B cell (primary cell): ENCODE measurements at regions of chr1 and their contacts with region 1.

Region 1: DNA sequence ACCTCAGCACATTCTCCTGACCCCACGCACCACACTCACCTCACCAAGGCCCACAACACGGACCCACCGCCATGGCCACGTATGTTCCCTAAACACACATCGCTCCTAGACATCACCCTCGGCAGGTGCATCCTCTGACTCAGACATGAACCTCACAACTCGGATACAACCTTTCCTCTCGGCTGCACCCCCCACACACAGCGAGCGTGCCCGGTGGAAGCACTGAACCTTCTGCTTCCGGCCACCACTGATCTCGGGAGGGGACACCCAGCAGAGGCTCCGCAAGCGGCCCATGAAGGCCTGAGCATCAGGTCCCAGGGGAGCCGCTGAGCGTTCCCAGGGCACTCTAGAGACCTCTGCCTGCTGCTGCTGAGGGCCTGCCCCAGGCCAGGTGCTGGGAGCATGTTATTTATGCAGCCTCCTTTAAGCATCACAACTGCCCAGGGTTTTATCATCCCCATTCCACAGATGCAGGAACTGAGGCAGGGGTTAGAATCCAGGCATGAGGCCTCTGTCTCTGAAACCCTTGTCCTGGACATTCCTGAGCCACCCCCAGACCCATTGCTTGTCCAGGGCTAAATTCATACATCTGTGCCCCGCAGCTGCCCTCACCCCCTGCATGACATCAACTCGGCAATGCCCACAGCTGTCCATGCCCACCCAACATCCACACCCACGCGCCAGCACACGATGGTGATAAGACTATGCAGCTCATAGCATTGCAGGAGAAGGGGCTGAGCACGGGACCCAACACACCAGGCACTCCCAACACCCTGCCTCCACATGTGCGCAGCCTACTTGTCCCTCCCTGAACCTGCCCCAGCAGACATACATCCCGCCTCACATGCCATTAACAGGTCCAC is 27.0 kb downstream of the SDC3 start:
- DNase-seq: peak; percentile 78
- ATAC-seq: peak; percentile 90
- H3K4me3 ChIP-seq: no peak overlapping the region
- H3K4me3 Mint-ChIP-seq: peak overlapping the region; percentile 64
- H3K27ac ChIP-seq: peak overlapping the region in 1 of 2 donors; percentile 16
- H3K27ac Mint-ChIP-seq: peak overlapping the region; percentile 88
- H3K4me1 ChIP-seq: peaks cover 14 to 20% of the 10 kb centered on the region in 2 donors
- H3K4me1 Mint-ChIP-seq: peaks cover 27% of the 10 kb centered on the region
- H3K27me3 ChIP-seq: peaks cover 0 to 17% (median 1%) of the 10 kb centered on the region in 4 experiments
- H3K27me3 Mint-ChIP-seq: peaks cover 45% of the 10 kb centered on the region
- CTCF ChIP-seq: no peak

Region 2: DNA sequence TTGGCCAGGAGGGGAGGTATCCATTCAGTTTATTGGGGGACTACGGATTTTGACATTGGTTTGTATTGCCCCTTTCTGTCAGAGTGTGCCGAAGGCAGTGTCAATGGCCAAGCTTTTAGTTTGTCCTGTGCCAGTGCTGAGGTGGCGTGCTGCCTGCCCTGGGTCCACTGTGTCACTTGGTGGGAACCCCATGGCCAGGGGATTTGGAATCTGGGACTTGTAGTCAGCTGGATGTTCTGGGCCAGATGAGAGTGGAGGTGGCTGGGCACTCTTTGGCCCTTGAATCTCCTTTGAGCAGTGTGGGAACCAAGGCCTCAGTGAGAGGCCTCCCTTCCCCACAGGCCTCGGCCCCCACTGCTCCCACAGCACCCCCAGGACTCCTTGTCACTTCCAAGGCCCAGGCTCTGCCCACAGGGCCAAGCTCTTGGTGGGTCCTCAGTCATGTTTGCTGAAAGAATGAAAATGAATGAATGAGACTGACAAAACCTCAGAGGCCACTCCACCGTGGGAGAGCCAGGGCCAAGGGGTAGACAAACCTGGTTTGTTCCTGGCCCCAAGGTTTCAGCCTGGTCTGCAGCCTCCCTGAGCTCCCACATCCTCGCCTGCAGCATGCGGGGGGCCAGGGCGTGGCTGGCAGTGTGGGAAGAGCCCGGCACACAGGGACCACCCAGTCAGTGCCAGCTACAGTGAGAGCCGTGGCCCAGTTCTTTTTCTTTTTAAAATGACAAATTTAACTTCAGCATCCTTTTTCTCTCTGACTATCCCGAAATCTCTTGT is 570.4 kb before region 1 on chr1:
- CTCF ChIA-PET with region 1: no interaction called
- POLR2A ChIA-PET with region 1: no interaction called
- intact Hi-C with region 1: no loop called
- DNase-seq: no peak
- ATAC-seq: no peak
- H3K4me3 ChIP-seq: no peak overlapping the region
- H3K4me3 Mint-ChIP-seq: no peak overlapping the region
- H3K27ac ChIP-seq: no peak overlapping the region
- H3K27ac Mint-ChIP-seq: no peak overlapping the region
- H3K4me1 ChIP-seq: no peaks in the 10 kb centered on the region
- H3K4me1 Mint-ChIP-seq: no peaks in the 10 kb centered on the region
- H3K27me3 ChIP-seq: peaks cover 0 to 6% (median 1%) of the 10 kb centered on the region in 4 experiments
- H3K27me3 Mint-ChIP-seq: peaks cover 27% of the 10 kb centered on the region
- CTCF ChIP-seq: no peak

Region 3: DNA sequence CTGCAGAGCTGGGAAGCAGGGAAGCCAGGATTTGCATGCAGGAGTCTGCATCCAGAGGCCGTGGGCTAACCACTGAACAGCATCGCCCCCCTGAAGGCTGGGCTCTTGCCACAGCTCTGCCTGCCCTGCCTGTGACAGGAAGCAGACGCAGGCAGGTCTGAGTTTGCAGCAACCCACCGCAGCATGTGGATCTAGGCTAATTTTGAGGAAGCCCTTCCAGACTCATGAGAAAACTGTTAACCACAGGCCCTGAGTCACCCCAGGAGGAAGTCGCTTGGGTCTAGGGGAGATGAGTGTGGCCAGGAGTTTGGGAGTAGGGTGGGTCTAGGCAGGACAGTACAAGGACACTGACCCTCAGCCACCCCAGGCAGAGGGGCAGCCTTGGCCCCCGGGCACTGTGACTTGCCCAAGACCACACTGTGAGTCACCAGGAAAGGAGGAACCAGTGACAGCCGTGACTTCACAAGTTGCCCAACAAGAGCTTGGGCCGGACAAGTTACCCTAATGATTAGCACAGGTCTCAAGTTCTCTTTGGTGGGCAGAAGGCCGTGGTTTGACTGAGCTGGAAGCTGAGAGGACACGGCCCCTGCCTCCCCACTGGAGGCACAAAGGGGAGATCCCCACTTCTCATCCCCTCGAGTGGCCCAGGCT is 124.9 kb before region 1 on chr1:
- CTCF ChIA-PET with region 1: no interaction called
- POLR2A ChIA-PET with region 1: no interaction called
- intact Hi-C with region 1: loop called (anchors 1 kb)
- DNase-seq: peak; percentile 87
- ATAC-seq: peak; percentile 19
- H3K4me3 ChIP-seq: peak overlapping the region; percentile 80 to 97 (median 95)
- H3K4me3 Mint-ChIP-seq: peak overlapping the region; percentile 92
- H3K27ac ChIP-seq: peak overlapping the region; percentile 98 to 100
- H3K27ac Mint-ChIP-seq: peak overlapping the region; percentile 92
- H3K4me1 ChIP-seq: peaks cover 62 to 87% of the 10 kb centered on the region in 2 donors
- H3K4me1 Mint-ChIP-seq: peaks cover 78% of the 10 kb centered on the region
- H3K27me3 ChIP-seq: no peaks in the 10 kb centered on the region
- H3K27me3 Mint-ChIP-seq: no peaks in the 10 kb centered on the region
- CTCF ChIP-seq: no peak

Region 4: GRCh38 chr1:30790850-30791778 is 90.4 kb before region 1 on chr1:
- CTCF ChIA-PET with region 1: interaction called, 3 read pairs
- POLR2A ChIA-PET with region 1: interaction called, 15 read pairs
- intact Hi-C with region 1: no loop called
- DNase-seq: peak; percentile 82
- ATAC-seq: peak; percentile 80
- H3K4me3 ChIP-seq: no peak overlapping the region
- H3K4me3 Mint-ChIP-seq: peak overlapping the region; percentile 76
- H3K27ac ChIP-seq: peak overlapping the region; percentile 18 to 55
- H3K27ac Mint-ChIP-seq: peak overlapping the region; percentile 74
- H3K4me1 ChIP-seq: peaks cover 14 to 18% of the 10 kb centered on the region in 2 donors
- H3K4me1 Mint-ChIP-seq: peaks cover 22% of the 10 kb centered on the region
- H3K27me3 ChIP-seq: peaks cover 0 to 10% (median 0%) of the 10 kb centered on the region in 4 experiments
- H3K27me3 Mint-ChIP-seq: peaks cover 23% of the 10 kb centered on the region
- CTCF ChIP-seq: no peak

Region 5: GRCh38 chr1:30823969-30824735 is 57.4 kb before region 1 on chr1:
- CTCF ChIA-PET with region 1: no interaction called
- POLR2A ChIA-PET with region 1: no interaction called
- intact Hi-C with region 1: loop called (anchors 5 kb)
- DNase-seq: peak; percentile 82
- ATAC-seq: peak; percentile 96
- H3K4me3 ChIP-seq: peak overlapping the region in 4 of 5 experiments; percentile 13 to 56 (median 31)
- H3K4me3 Mint-ChIP-seq: peak overlapping the region; percentile 89
- H3K27ac ChIP-seq: no peak overlapping the region
- H3K27ac Mint-ChIP-seq: no peak overlapping the region
- H3K4me1 ChIP-seq: peaks cover 15 to 22% of the 10 kb centered on the region in 2 donors
- H3K4me1 Mint-ChIP-seq: peaks cover 22% of the 10 kb centered on the region
- H3K27me3 ChIP-seq: peaks cover 0 to 51% (median 37%) of the 10 kb centered on the region in 4 experiments
- H3K27me3 Mint-ChIP-seq: peaks cover 75% of the 10 kb centered on the region
- CTCF ChIP-seq: no peak

Region 6: DNA sequence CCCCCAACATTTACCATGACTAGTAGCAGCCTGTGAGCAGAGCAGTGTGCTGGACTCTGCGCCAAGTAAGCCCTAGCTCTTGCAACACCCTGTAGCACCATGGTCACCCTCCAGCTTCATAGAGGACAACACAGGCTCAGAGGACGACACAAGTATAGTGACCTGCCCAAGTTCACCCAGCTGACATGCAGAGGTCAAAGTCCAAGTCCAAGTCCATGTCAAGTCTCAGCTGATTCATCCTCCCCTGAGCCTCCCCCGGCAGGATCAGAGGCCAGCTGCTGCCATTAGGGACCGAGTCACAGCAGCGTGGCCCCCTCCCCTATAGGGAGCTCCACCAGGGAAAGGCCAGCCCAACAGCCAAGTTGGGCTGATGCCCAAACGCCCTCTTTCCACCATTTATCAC is 11.1 kb after region 1 on chr1:
- CTCF ChIA-PET with region 1: no interaction called
- POLR2A ChIA-PET with region 1: no interaction called
- intact Hi-C with region 1: loop called (anchors 1 kb)
- DNase-seq: no peak
- ATAC-seq: no peak
- H3K4me3 ChIP-seq: no peak overlapping the region
- H3K4me3 Mint-ChIP-seq: no peak overlapping the region
- H3K27ac ChIP-seq: no peak overlapping the region
- H3K27ac Mint-ChIP-seq: no peak overlapping the region
- H3K4me1 ChIP-seq: peaks cover 5 to 12% of the 10 kb centered on the region in 2 donors
- H3K4me1 Mint-ChIP-seq: peaks cover 8% of the 10 kb centered on the region
- H3K27me3 ChIP-seq: peaks cover 0 to 34% (median 15%) of the 10 kb centered on the region in 4 experiments
- H3K27me3 Mint-ChIP-seq: peaks cover 40% of the 10 kb centered on the region
- CTCF ChIP-seq: no peak